Activated CD8-positive, alpha-beta T cell treated with anti-CD3 and anti-CD28 coated beads, Interleukin-2, amount 10 ng/mL, durations not matched to agents 7 days and 5 days (primary cell): ENCODE measurements at regions of chr14 and their contacts with region 1.

Region 1: DNA sequence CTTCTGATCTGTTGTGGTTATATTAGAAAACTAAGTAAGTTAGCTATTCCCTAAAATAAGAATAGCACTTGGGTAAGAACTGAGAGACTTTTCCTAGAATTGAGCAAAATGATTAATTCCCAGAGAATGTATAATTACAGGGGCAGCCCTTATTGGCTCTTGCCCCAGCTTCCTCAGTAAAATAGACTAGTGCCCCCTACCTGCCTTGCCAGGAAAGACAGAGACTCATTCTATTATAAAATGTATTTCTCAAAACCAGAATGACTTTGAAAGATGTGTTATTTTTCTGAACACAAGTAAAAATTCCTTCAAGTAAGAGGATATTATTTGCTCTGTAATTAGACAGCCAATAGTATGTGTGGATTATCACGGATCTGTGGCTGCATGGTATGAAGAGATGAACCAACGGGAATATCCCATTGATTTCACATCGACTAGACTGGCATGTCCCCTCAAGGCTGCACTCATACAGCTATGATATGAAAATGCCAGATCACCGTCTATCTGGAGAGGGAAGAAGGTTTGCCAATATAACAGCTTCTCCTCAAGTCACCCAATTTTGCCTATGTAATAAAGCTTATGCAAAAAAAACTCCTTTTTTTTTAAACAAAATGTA is 7.4 kb upstream of the GLRX5 start:
- DNase-seq: peak; percentile 74
- ATAC-seq: no peak
- H3K4me3 Mint-ChIP-seq: no peak overlapping the region
- H3K27ac Mint-ChIP-seq: peak overlapping the region; percentile 65
- H3K4me1 Mint-ChIP-seq: peaks cover 78% of the 10 kb centered on the region
- H3K27me3 Mint-ChIP-seq: no peaks in the 10 kb centered on the region

Region 2: DNA sequence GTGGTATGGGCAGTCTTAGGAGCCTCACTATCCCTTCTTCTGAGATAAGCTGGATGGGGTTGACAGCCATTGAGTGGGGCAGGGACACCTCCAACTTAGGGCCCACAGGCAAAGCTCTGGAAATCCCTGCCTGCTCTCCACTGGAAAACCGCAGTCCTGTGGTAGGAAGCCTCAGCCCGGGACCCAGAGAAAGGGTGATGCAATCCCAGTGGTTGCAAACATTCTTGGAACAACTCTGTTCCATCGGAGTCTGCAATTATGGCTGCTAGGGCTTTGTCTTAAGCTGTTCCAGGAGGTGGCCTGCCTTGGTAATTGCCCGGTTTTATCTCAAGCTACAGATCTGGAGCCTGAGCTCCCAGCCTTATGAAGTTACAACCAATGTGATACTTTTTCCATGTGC is 503.6 kb before region 1 on chr14:
- CTCF ChIA-PET with region 1: no interaction called
- POLR2A ChIA-PET with region 1: no interaction called
- DNase-seq: peak; percentile 7
- ATAC-seq: no peak
- H3K4me3 Mint-ChIP-seq: no peak overlapping the region
- H3K27ac Mint-ChIP-seq: no peak overlapping the region
- H3K4me1 Mint-ChIP-seq: peaks cover 4% of the 10 kb centered on the region
- H3K27me3 Mint-ChIP-seq: peaks cover 7% of the 10 kb centered on the region

Region 3: DNA sequence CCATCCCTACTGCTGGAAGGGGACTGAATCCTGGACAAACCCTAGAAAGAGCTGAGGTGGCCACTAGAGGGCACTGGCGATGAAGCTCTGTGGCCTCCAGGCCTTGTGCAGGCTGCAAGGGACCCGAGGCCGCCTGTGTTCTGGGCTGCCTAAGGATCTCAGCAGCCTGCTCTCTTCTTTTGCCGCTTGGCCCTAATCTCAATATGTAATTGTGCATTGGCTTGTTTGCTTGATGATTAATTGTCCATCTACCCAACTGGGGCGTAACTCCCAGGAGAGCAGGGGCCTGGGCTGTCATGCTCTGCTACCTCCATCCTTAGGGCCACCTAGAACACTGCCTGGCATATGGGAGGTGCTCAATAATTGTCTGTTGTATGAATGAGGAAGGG is 84.9 kb before region 1 on chr14:
- CTCF ChIA-PET with region 1: interaction called, 185 read pairs
- POLR2A ChIA-PET with region 1: interaction called, 7 read pairs
- DNase-seq: peak; percentile 78
- ATAC-seq: peak; percentile 94
- H3K4me3 Mint-ChIP-seq: no peak overlapping the region
- H3K27ac Mint-ChIP-seq: peak overlapping the region; percentile 40
- H3K4me1 Mint-ChIP-seq: peaks cover 3% of the 10 kb centered on the region
- H3K27me3 Mint-ChIP-seq: no peaks in the 10 kb centered on the region

Region 4: GRCh38 chr14:95463171-95463901 is 64.2 kb before region 1 on chr14:
- CTCF ChIA-PET with region 1: interaction called, 17 read pairs
- POLR2A ChIA-PET with region 1: interaction called, 5 read pairs
- DNase-seq: peak; percentile 48
- ATAC-seq: peak; percentile 70
- H3K4me3 Mint-ChIP-seq: peak overlapping the region; percentile 18
- H3K27ac Mint-ChIP-seq: peak overlapping the region; percentile 89
- H3K4me1 Mint-ChIP-seq: peaks cover 49% of the 10 kb centered on the region
- H3K27me3 Mint-ChIP-seq: no peaks in the 10 kb centered on the region

Region 5: DNA sequence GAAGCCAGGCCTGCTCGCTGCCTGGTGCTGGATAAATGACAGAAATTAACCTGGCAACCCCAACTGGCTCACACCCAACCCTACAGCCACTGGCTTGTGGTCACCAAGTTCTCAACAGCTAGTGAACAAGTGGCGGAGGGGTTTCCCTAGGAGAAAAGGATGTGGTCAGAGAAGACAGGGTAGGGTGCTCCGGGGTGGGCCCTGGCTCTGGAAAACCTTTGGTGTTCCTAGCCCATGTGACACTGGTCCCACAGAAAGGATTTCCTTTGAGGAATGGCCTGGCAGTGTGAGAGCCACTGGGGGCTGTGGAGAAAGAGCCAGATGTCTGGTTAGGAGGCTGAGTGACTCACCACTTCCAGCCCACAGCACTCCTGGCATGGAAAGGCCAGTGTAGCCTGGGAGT is 19.8 kb before region 1 on chr14:
- CTCF ChIA-PET with region 1: interaction called, 199 read pairs
- POLR2A ChIA-PET with region 1: interaction called, 23 read pairs
- DNase-seq: peak; percentile 51
- ATAC-seq: peak; percentile 64
- H3K4me3 Mint-ChIP-seq: no peak overlapping the region
- H3K27ac Mint-ChIP-seq: peak overlapping the region; percentile 66
- H3K4me1 Mint-ChIP-seq: peaks cover 78% of the 10 kb centered on the region
- H3K27me3 Mint-ChIP-seq: no peaks in the 10 kb centered on the region